Dorsolateral prefrontal cortex (tissue), 120 donors: ENCODE measurements at regions of chr1 and their contacts with region 1.

Region 1: GRCh38 chr1:221741711-221742554 is at the start of gene DUSP10:
- DNase-seq: peak; percentile 82 to 100 (median 99)
- H3K4me3 ChIP-seq: peak within 1 kb of the TSS; percentile 47 to 91 (median 78)
- H3K27ac ChIP-seq: peak within 1 kb of the TSS; percentile 86 to 99 (median 97)
- H3K27me3 ChIP-seq: peaks cover 0 to 14% (median 0%) of the 10 kb centered on the region in 45 donors
- CTCF ChIP-seq: peak in 3 of 56 donors; percentile 10 to 37 (median 17)
- total RNA-seq, gene DUSP10: 2.7 to 28.4 (median 9.0) TPM

Region 2: DNA sequence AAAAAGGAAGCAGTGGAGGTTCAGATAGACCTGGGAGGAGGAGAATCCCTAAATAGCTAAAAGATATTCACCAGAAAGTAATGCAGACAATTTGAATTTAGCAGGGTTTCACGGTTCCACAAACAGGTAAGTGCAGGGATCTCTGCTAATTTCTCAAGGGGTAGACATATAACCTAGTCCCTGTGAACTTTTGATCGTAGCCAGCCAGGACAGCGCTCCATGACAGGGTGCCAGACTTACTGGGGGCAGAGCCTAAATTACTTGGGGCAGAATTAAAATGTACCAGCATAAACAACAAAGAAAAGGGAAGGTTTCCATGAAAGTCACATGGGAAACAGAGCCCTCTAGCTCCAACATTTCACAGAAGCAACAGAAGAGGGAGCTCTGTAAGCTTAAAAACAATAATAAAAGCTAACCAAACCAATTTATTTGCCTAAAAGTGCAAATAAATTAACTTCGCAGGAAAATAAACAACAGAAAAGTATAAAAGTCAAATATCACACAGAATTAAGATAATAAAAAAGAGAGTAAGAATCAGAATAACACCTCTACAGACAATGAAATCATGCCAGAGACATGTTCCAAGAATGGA is 198.3 kb before region 1 on chr1:
- intact Hi-C with region 1: loop called (anchors 2 to 5 kb)
- DNase-seq: no peak
- H3K4me3 ChIP-seq: no peak overlapping the region
- H3K27ac ChIP-seq: no peak overlapping the region
- H3K27me3 ChIP-seq: peaks cover 0 to 6% (median 0%) of the 10 kb centered on the region in 45 donors
- CTCF ChIP-seq: peak; percentile 25 to 80 (median 61)

Region 3: GRCh38 chr1:221637641-221638041 is 104.3 kb before region 1 on chr1:
- intact Hi-C with region 1: loop called in 1 of 2 experiments (anchors 2 kb)
- DNase-seq: peak in 3 of 10 donors; percentile 29 to 36 (median 34)
- H3K4me3 ChIP-seq: no peak overlapping the region
- H3K27ac ChIP-seq: peak overlapping the region in 2 of 59 donors; percentile 21 to 25
- H3K27me3 ChIP-seq: peaks cover 0 to 3% (median 0%) of the 10 kb centered on the region in 45 donors
- CTCF ChIP-seq: peak in 26 of 56 donors; percentile 8 to 46 (median 26)

Region 4: GRCh38 chr1:221693087-221693486 is 48.8 kb before region 1 on chr1:
- intact Hi-C with region 1: no loop called
- DNase-seq: no peak
- H3K4me3 ChIP-seq: no peak overlapping the region
- H3K27ac ChIP-seq: no peak overlapping the region
- H3K27me3 ChIP-seq: no peaks in the 10 kb centered on the region
- CTCF ChIP-seq: peak in 1 of 56 donors; percentile 23

Region 5: GRCh38 chr1:221994274-221994698 is 252.4 kb after region 1 on chr1:
- intact Hi-C with region 1: loop called in 1 of 2 experiments (anchors 10 kb)
- DNase-seq: no peak
- H3K4me3 ChIP-seq: no peak overlapping the region
- H3K27ac ChIP-seq: peak overlapping the region in 56 of 59 donors; percentile 14 to 99 (median 89)
- H3K27me3 ChIP-seq: no peaks in the 10 kb centered on the region
- CTCF ChIP-seq: no peak

Region 6: DNA sequence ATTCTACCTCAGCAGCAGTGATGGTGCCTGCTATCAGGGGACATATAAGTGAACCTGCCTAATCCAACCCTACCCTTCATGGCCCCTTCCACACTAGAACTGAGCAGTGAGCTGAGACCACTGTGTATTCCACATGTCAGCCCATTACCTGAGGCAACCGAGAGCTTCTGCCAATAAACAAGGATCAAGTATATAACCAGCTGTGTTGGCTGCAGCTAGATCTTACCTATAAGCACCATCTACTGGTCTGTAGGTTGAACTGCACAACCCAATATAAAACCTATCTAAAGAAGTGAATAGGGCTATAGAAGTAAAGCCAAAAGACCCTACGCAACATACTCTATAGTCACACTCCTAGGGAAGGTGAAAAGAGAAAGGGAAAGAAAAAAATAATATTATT is 429.1 kb after region 1 on chr1:
- intact Hi-C with region 1: loop called in 1 of 2 experiments (anchors 5 kb)
- DNase-seq: no peak
- H3K4me3 ChIP-seq: no peak overlapping the region
- H3K27ac ChIP-seq: no peak overlapping the region
- H3K27me3 ChIP-seq: no peaks in the 10 kb centered on the region
- CTCF ChIP-seq: peak in 52 of 56 donors; percentile 16 to 70 (median 49)